CD14-positive monocyte (primary cell): ENCODE measurements at regions of chr11 and their contacts with region 1.

Region 1: DNA sequence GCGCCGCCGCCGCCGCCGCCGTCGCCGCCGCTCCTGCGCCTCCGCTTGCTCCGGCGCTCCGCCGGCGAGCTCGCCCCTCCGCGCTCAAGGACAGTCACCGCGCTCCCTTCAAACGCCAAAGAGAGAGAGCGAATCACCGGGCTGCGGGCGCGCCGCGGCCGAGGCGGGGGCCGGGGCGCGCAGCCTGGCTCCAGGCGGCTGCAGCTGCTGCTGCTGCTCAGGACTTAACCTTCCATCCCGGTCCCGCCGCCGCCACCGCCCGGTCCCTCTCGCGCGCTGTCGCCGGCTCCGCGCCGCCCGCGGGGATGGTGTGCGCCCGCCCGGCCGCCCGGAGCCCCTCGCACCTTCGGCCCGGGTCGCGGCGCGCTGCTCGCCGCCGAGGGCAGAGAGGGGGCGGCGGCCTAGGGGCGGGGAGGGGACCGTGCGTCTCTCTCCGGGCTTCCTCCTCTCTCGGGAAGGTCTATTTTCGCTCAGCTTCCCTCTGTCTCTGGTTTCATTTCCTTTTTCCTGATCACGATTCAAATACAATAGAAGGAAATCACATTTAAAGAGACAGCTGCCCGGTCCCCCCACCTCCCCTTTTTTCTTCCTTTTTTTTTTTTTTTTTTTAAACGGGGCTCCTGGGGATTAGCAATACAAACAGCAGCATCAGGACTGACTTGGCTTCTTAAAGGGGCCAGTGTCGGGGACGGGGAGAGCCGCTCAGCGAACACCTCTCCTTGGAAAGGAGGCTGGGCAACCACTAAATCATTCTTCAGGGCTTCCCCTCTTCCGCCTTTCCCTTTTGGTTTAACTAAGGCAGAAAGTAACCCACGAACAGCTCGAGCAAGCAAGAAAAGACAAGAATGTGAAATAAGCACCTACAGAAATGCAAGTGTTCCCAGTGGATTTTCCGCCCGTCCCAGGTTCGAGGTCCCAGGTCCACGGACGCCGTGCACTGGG is 22.1 kb downstream of the LMO2 start:
- DNase-seq: peak; percentile 81 to 92 (median 89)
- H3K4me3 ChIP-seq: peak overlapping the region; percentile 63 to 97 (median 94)
- H3K4me3 Mint-ChIP-seq: peak overlapping the region; percentile 97 to 98
- H3K27ac ChIP-seq: peak overlapping the region; percentile 86
- H3K27ac Mint-ChIP-seq: peak overlapping the region; percentile 95 to 99 (median 98)
- H3K4me1 ChIP-seq: peaks cover 62 to 76% of the 10 kb centered on the region in 2 donors
- H3K4me1 Mint-ChIP-seq: peaks cover 69% of the 10 kb centered on the region
- H3K27me3 ChIP-seq: no peaks in the 10 kb centered on the region
- H3K27me3 Mint-ChIP-seq: no peaks in the 10 kb centered on the region
- CTCF ChIP-seq: no peak

Region 2: DNA sequence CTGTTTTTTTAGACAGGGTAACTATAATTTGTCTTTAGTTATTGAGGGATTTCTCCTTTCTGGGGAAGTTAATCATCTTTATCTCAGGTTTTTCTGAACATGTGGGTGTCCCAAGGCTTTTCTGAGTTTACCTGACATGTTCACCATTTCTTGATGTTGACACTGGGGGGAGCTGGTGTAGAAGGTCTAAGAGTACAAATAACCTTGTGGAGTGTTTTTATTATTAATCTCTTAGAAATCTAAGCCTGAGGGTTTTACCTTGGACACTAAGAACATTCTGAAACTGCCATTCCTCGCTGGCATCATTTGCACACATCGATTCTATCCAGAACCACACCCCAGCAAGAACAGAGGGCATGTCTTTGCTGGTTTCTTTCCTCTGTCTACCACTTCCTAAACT is 153.5 kb before region 1 on chr11:
- intact Hi-C with region 1: no loop called
- DNase-seq: no peak
- H3K4me3 ChIP-seq: no peak overlapping the region
- H3K4me3 Mint-ChIP-seq: no peak overlapping the region
- H3K27ac ChIP-seq: no peak overlapping the region
- H3K27ac Mint-ChIP-seq: no peak overlapping the region
- H3K4me1 ChIP-seq: no peaks in the 10 kb centered on the region
- H3K4me1 Mint-ChIP-seq: no peaks in the 10 kb centered on the region
- H3K27me3 ChIP-seq: no peaks in the 10 kb centered on the region
- H3K27me3 Mint-ChIP-seq: peaks cover 0 to 2% (median 0%) of the 10 kb centered on the region in 3 donors
- CTCF ChIP-seq: peak; percentile 13

Region 3: DNA sequence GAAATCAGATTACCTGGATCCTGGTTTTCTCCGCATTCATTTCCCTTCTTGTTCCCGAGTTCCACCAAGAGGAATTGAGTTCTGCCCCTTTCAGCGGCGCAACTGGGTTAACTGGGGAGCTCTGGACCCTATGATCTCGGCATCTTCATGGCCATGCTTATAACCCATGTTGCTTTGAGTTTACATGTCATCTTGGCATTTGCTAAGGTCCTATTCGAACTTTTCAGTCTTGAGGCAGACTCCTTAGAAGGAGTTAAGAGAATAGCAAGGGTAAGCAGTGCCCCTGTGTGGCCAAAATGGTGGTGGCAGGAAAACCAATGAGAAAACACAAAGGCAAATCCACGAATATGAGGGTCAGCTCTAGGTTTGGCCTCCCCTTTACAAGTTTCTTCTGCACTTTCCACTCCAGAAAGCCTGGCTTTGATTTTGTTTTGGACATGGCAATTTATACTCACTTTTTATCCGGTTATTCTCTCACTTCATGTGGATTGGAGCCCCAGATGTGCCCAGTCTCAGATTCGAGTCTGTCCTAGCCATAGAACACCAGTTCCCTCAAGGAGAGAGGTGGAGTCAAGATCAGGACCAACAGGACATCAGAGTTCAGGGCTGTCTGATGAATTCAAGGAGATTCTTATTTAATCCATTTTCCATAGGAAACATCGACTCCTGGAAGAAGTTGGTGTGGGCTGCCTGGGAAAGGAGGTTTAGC is 40.2 kb before region 1 on chr11:
- intact Hi-C with region 1: no loop called
- DNase-seq: peak; percentile 26 to 41 (median 27)
- H3K4me3 ChIP-seq: peak overlapping the region in 2 of 3 experiments; percentile 0 to 67
- H3K4me3 Mint-ChIP-seq: peak overlapping the region; percentile 76 to 93
- H3K27ac ChIP-seq: no peak overlapping the region
- H3K27ac Mint-ChIP-seq: peak overlapping the region in 1 of 7 donors; percentile 46
- H3K4me1 ChIP-seq: peaks cover 9 to 10% of the 10 kb centered on the region in 2 donors
- H3K4me1 Mint-ChIP-seq: peaks cover 8% of the 10 kb centered on the region
- H3K27me3 ChIP-seq: peaks cover 31 to 49% of the 10 kb centered on the region in 2 donors
- H3K27me3 Mint-ChIP-seq: peaks cover 52 to 63% (median 52%) of the 10 kb centered on the region in 3 donors
- CTCF ChIP-seq: peak; percentile 72

Region 4: GRCh38 chr11:33893711-33894397 is 24.1 kb after region 1 on chr11:
- intact Hi-C with region 1: loop called in 1 of 2 experiments (anchors 2 kb)
- DNase-seq: peak; percentile 75 to 91 (median 82)
- H3K4me3 ChIP-seq: peak overlapping the region; percentile 48 to 82 (median 62)
- H3K4me3 Mint-ChIP-seq: peak overlapping the region; percentile 82 to 93
- H3K27ac ChIP-seq: peak overlapping the region; percentile 92 to 98
- H3K27ac Mint-ChIP-seq: peak overlapping the region; percentile 94 to 100 (median 98)
- H3K4me1 ChIP-seq: peaks cover 99% of the 10 kb centered on the region in 2 donors
- H3K4me1 Mint-ChIP-seq: peaks cover 90% of the 10 kb centered on the region
- H3K27me3 ChIP-seq: no peaks in the 10 kb centered on the region
- H3K27me3 Mint-ChIP-seq: no peaks in the 10 kb centered on the region
- CTCF ChIP-seq: no peak

Region 5: DNA sequence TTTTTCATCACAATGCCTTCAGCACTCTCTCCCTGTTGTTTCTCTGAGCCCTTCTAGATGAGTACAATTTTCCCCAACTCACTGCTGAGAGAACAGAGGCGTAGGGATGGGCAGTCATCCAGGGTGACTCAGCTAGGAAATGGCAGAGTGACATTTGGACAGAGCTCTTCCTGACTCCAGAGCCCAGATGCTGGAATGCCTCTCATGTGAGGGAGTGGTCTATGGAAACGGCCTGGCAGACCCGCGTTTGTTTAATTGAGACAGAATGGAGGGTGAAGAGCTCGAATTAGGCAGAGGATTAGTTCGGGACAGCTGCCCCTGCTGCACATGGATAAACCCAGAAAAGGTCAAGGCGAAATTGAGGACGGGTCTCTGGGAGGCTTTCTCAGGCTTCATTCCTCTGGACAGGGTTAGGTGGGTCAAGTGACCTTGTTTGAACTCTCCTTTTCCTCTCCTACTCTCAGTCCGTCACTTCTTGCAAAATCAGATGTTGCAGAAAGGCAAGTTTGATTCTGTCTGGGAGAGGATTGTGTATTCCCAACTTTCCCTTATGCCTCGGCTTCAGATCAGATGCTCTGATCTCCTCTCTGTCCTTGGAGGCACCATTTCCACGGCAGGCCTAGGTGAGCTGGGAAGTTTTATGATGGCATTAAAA is 29.8 kb after region 1 on chr11:
- intact Hi-C with region 1: loop called in 1 of 2 experiments (anchors 5 kb)
- DNase-seq: peak in 2 of 3 donors; percentile 57 to 63
- H3K4me3 ChIP-seq: peak overlapping the region in 1 of 3 experiments; percentile 27
- H3K4me3 Mint-ChIP-seq: peak overlapping the region in 1 of 2 donors; percentile 52
- H3K27ac ChIP-seq: peak overlapping the region in 1 of 2 donors; percentile 65
- H3K27ac Mint-ChIP-seq: peak overlapping the region; percentile 22 to 89 (median 76)
- H3K4me1 ChIP-seq: peaks cover 62 to 66% of the 10 kb centered on the region in 2 donors
- H3K4me1 Mint-ChIP-seq: peaks cover 65% of the 10 kb centered on the region
- H3K27me3 ChIP-seq: no peaks in the 10 kb centered on the region
- H3K27me3 Mint-ChIP-seq: peaks cover 0 to 1% (median 0%) of the 10 kb centered on the region in 3 donors
- CTCF ChIP-seq: no peak

Region 6: DNA sequence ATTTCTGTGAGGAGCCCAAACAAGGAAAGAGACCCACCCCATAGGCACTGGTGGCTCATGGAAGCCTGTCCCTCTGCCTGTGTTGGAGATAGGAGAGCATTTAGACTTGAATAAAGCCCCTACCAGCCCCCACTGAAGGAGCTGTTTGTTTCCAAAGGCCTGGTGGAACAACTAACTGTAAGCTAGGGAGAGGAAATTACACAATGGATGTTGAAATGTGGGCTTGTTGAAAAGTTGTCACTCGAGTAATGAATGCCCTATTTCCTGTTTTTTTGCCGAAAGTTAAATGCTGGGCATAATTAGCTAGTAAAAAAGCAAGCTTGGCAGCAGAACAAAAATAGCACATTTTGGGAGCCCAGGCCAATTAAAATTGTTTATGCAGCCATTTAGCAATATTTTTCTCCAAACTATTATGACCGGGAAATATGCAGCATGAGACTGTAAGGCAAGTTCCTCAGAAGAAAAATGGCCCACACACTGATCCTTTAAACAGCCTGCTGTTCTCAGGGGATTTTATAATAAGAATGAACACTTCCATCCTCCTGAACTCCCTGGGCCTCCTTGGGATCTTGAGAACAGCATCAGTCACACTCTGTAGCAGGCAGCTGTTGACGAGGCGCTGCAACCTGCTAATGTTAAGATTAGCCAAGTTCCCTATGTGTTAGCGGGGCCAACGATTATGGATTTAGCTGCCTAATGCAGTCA is 60.7 kb after region 1 on chr11:
- intact Hi-C with region 1: loop called (anchors 2 to 10 kb)
- DNase-seq: peak; percentile 83 to 99 (median 93)
- H3K4me3 ChIP-seq: peak overlapping the region in 2 of 3 experiments; percentile 23 to 68
- H3K4me3 Mint-ChIP-seq: peak overlapping the region; percentile 56 to 85
- H3K27ac ChIP-seq: peak overlapping the region; percentile 85 to 99
- H3K27ac Mint-ChIP-seq: peak overlapping the region; percentile 94 to 99 (median 98)
- H3K4me1 ChIP-seq: peaks cover 79 to 82% of the 10 kb centered on the region in 2 donors
- H3K4me1 Mint-ChIP-seq: peaks cover 82% of the 10 kb centered on the region
- H3K27me3 ChIP-seq: no peaks in the 10 kb centered on the region
- H3K27me3 Mint-ChIP-seq: no peaks in the 10 kb centered on the region
- CTCF ChIP-seq: no peak

Region 7: GRCh38 chr11:33936725-33937604 is 67.2 kb after region 1 on chr11:
- intact Hi-C with region 1: loop called in 1 of 2 experiments (anchors 10 kb)
- DNase-seq: peak in 2 of 3 donors; percentile 39 to 49
- H3K4me3 ChIP-seq: peak overlapping the region in 1 of 3 experiments; percentile 3
- H3K4me3 Mint-ChIP-seq: peak overlapping the region in 1 of 2 donors; percentile 83
- H3K27ac ChIP-seq: no peak overlapping the region
- H3K27ac Mint-ChIP-seq: peak overlapping the region in 6 of 7 donors; percentile 35 to 79 (median 62)
- H3K4me1 ChIP-seq: peaks cover 55 to 57% of the 10 kb centered on the region in 2 donors
- H3K4me1 Mint-ChIP-seq: peaks cover 60% of the 10 kb centered on the region
- H3K27me3 ChIP-seq: no peaks in the 10 kb centered on the region
- H3K27me3 Mint-ChIP-seq: peaks cover 0 to under 1% (median 0%) of the 10 kb centered on the region in 3 donors
- CTCF ChIP-seq: no peak

Region 8: GRCh38 chr11:34051349-34052035 is 181.7 kb after region 1 on chr11 and contains the start of gene CAPRIN1:
- intact Hi-C with region 1: loop called in 1 of 2 experiments (anchors 5 kb)
- DNase-seq: peak; percentile 70 to 77 (median 74)
- H3K4me3 ChIP-seq: peak within 1 kb of the TSS; percentile 71 to 100 (median 79)
- H3K4me3 Mint-ChIP-seq: peak within 1 kb of the TSS; percentile 98 to 99
- H3K27ac ChIP-seq: peak within 1 kb of the TSS; percentile 91 to 99
- H3K27ac Mint-ChIP-seq: peak within 1 kb of the TSS; percentile 90 to 97 (median 95)
- H3K4me1 ChIP-seq: peaks cover 16 to 39% of the 10 kb centered on the region in 2 donors
- H3K4me1 Mint-ChIP-seq: peaks cover 35% of the 10 kb centered on the region
- H3K27me3 ChIP-seq: no peaks in the 10 kb centered on the region
- H3K27me3 Mint-ChIP-seq: peaks cover 0 to 1% (median 0%) of the 10 kb centered on the region in 3 donors
- CTCF ChIP-seq: no peak
- polyA plus RNA-seq, gene CAPRIN1: 50.4 to 81.5 (median 59.2) TPM